ENCODE measurements at regions of chr14 and their contacts with region 1.

Region 1: GRCh38 chr14:74955229-74956026 is at the start of gene PGF:
- DNase-seq: peak; percentile 72
- H3K4me3 ChIP-seq: peak within 1 kb of the TSS; percentile 83 to 94 (median 84)
- H3K27ac ChIP-seq: peak within 1 kb of the TSS; percentile 71
- H3K4me1 ChIP-seq: peaks cover 42% of the 10 kb centered on the region
- H3K27me3 ChIP-seq: no peaks in the 10 kb centered on the region
- CTCF ChIP-seq: peak in 1 of 2 donors; percentile 1
- POLR2A ChIP-seq: peak; percentile 99
- total RNA-seq, gene PGF: 206 and 254 TPM in 2 replicates

Region 2: GRCh38 chr14:74932401-74932901 is 23.0 kb before region 1 on chr14:
- CTCF ChIA-PET with region 1: no interaction called
- POLR2A ChIA-PET with region 1: no interaction called
- dilution Hi-C with region 1: no loop called
- intact Hi-C with region 1: no loop called
- DNase-seq: peak; percentile 93
- H3K4me3 ChIP-seq: no peak overlapping the region
- H3K27ac ChIP-seq: peak overlapping the region; percentile 48
- H3K4me1 ChIP-seq: peaks cover 7% of the 10 kb centered on the region
- H3K27me3 ChIP-seq: no peaks in the 10 kb centered on the region
- CTCF ChIP-seq: no peak
- POLR2A ChIP-seq: no peak

Region 3: GRCh38 chr14:74973003-74973653 is 17.7 kb after region 1 on chr14:
- CTCF ChIA-PET with region 1: interaction called, 5 read pairs
- POLR2A ChIA-PET with region 1: interaction called, 10 read pairs
- dilution Hi-C with region 1: no loop called
- intact Hi-C with region 1: loop called (anchors 2 kb)
- DNase-seq: peak; percentile 84
- H3K4me3 ChIP-seq: no peak overlapping the region
- H3K27ac ChIP-seq: peak overlapping the region; percentile 62
- H3K4me1 ChIP-seq: peaks cover 23% of the 10 kb centered on the region
- H3K27me3 ChIP-seq: no peaks in the 10 kb centered on the region
- CTCF ChIP-seq: no peak
- POLR2A ChIP-seq: peak; percentile 17

Region 4: DNA sequence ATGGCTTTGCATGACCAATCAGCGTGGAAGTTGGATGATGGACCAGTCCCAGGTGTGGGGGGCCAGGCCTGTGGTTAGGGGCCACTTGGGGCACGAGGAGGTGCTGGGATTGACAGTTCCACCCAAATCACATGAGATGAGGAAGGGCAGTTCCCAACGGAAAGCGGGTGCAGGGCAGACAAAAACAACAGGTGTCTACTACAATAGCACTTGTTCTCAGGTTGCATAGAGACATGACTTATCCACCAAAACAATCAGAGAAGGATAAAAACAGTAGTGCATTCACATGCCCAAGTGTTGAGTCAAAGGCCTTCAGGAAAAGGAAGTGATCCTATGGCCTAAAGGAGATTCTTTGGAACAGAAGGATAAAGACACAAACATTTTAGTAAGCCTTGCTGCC is 32.7 kb after region 1 on chr14:
- CTCF ChIA-PET with region 1: interaction called, 4 read pairs
- POLR2A ChIA-PET with region 1: interaction called, 6 read pairs
- dilution Hi-C with region 1: no loop called
- intact Hi-C with region 1: loop called (anchors 1 kb)
- DNase-seq: peak; percentile 97
- H3K4me3 ChIP-seq: no peak overlapping the region
- H3K27ac ChIP-seq: peak overlapping the region; percentile 99
- H3K4me1 ChIP-seq: peaks cover 39% of the 10 kb centered on the region
- H3K27me3 ChIP-seq: no peaks in the 10 kb centered on the region
- CTCF ChIP-seq: no peak
- POLR2A ChIP-seq: no peak

Region 5: DNA sequence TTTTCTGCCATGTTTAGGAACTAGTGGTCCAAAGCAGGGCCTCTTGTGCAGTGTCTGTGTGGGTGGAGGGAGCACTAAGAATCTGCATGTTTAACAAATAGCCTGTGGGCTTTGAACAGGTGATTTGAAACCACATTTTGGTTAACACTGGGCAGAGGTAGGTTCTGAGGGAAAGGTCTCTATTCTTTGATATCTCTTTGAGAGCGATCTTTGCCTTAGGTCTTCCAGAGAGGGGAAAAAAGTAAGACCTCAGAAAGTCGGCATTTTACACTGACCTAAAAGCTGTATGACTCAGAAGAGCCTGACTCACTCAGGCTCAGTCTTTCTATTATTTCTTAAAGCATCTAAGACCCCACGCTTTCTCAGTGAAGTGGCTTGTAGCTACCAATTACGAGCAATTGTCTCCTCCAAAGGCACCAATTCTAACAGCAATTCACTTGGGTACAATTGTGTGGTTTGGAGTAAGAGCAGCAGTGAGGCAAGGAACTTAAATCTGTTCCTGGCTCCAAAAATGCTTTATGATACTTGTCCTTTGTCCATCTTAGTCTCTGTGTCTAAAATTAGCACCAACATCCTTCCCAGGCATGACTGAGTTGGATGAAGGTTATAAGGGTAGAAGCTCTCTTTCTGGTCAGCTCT is 56.0 kb after region 1 on chr14:
- CTCF ChIA-PET with region 1: no interaction called
- POLR2A ChIA-PET with region 1: interaction called, 10 read pairs
- dilution Hi-C with region 1: no loop called
- intact Hi-C with region 1: loop called (anchors 2 kb)
- DNase-seq: peak; percentile 80
- H3K4me3 ChIP-seq: no peak overlapping the region
- H3K27ac ChIP-seq: peak overlapping the region; percentile 86
- H3K4me1 ChIP-seq: peaks cover 14% of the 10 kb centered on the region
- H3K27me3 ChIP-seq: no peaks in the 10 kb centered on the region
- CTCF ChIP-seq: no peak
- POLR2A ChIP-seq: peak; percentile 24

Region 6: DNA sequence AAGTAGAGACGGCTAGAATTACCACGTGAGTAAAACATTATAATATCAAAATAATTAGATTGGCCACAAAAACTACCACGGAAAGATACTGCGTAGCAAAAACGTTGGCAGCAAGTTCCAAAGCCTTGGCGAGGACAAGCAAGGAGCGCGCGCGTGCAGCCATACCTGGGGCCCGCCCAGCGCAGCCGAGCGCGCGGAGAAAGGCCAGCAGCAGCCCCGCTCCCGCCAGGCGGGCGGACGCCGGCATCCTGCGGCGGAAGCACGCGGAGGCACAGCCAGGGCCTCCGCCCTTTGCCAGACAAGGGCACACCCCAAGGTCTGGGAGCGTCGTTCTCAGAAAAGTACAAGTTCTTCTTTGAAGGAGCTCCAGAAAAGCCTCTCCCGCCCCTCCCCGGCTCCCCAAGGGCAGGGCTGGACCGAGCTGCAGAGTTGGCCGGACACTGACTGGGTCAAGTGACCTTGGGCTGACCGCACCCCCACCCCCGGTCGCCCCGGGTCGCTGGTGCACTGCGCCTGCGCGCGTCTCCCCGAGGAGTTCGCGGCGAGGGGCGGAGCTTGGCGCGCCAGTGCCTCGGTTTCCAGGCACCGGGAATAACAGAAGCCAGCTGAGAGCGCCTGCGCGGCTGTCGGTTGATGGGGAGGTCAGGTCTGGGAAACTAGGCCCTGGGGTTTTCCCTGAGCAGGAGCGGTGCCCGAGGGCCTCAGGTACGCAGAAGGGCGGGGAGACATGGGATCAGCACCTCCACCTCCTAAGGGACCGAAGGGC is 113.8 kb after region 1 on chr14 and contains the start of gene ZC2HC1C:
- CTCF ChIA-PET with region 1: interaction called, 3 read pairs
- POLR2A ChIA-PET with region 1: interaction called, 4 read pairs
- dilution Hi-C with region 1: no loop called
- intact Hi-C with region 1: loop called (anchors 2 kb)
- DNase-seq: peak; percentile 91
- H3K4me3 ChIP-seq: peak within 1 kb of the TSS; percentile 31 to 69 (median 59)
- H3K27ac ChIP-seq: peak within 1 kb of the TSS; percentile 86
- H3K4me1 ChIP-seq: peaks cover 14% of the 10 kb centered on the region
- H3K27me3 ChIP-seq: no peaks in the 10 kb centered on the region
- CTCF ChIP-seq: no peak
- POLR2A ChIP-seq: peak; percentile 77
- total RNA-seq, gene ZC2HC1C: 0.91 and 3.6 TPM in 2 replicates

Measured in endothelial cell of umbilical vein (primary cell).